ENCODE measurements at regions of chr15 and their contacts with region 1.

Region 1: GRCh38 chr15:32936283-32936918 is 218.6 kb downstream of the GREM1 start:
- DNase-seq: peak; percentile 56
- H3K4me3 ChIP-seq: no peak overlapping the region
- CTCF ChIP-seq: peak; percentile 78

Region 2: DNA sequence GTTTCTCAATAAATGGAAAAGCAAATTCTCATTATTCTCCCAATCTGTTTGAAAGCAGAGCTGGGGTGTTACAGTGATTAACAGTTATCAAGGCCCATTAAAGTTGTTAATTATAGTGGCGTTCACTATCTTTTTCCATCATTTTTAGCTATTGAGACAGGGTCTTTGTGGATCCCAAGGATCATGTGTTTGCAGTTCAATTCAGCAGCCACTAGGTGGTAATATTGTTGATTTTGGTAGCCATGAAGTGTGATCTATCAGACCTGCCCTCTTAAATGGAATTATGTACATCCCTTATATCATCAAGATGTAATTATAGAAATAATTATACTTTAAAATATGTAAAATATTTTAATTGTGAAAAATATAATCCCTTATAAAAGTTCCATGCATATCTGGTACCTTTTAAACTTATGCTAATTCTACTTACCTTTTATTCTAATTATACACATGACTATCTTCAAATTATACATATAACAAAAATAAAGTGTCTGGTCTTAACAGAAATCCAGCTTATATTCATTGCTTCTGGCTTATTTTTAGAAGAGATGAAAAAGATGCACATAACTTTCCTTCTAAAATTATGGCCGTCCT is 92.2 kb before region 1 on chr15:
- in situ Hi-C with region 1: loop called (anchors 25 kb)
- DNase-seq: peak; percentile 65
- H3K4me3 ChIP-seq: no peak overlapping the region
- CTCF ChIP-seq: peak; percentile 70

Measured in astrocyte of the spinal cord (primary cell).